PC-3 (cell line): ENCODE measurements at regions of chr2 and their contacts with region 1.

Region 1: GRCh38 chr2:170369894-170370293 is 191.9 kb downstream of the MYO3B start:
- DNase-seq: peak; percentile 79
- ATAC-seq: 0 out of 2 replicates have a peak, but pooled peaks have one; percentile 32
- H3K4me3 ChIP-seq: no peak overlapping the region
- H3K27ac ChIP-seq: no peak overlapping the region
- H3K4me1 ChIP-seq: peaks cover 18% of the 10 kb centered on the region
- H3K27me3 ChIP-seq: no peaks in the 10 kb centered on the region
- CTCF ChIP-seq: peak; percentile 62

Region 2: DNA sequence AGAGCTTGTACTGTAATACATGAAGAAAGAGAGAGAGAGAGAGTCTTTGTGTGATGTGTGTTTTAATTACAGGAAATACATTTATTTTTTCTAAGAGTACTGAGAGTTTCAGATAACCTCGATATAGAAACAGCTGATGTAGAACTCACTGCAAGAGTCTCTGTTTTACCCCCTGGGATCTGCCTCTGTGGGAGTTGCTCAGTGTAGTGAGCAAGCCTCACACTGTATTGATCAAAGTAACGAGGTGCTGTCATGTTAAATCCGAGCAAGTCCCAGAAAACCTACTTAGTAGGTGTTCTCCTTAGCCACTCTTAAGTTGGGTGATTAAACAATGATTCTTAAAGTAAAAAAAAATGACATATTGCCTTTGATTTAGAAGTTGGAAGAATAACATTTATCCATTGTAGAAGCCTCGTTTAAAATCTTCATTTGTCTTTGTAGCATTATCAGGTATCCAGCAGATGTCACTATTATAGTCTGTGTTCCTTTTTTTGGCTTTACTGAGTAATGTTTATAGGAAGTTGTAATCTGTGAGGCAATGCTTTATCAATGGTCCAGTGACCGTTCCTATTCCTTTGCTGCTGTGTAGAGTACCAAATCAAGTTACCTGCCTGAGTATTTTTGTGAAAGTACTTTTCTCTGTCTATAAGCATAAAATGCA is 27.0 kb after region 1 on chr2:
- CTCF ChIA-PET with region 1: no interaction called
- POLR2A ChIA-PET with region 1: no interaction called
- intact Hi-C with region 1: loop called (anchors 1 kb)
- DNase-seq: peak; percentile 63
- ATAC-seq: peak; percentile 68
- H3K4me3 ChIP-seq: no peak overlapping the region
- H3K27ac ChIP-seq: no peak overlapping the region
- H3K4me1 ChIP-seq: peaks cover 11% of the 10 kb centered on the region
- H3K27me3 ChIP-seq: no peaks in the 10 kb centered on the region
- CTCF ChIP-seq: peak; percentile 80

Region 3: DNA sequence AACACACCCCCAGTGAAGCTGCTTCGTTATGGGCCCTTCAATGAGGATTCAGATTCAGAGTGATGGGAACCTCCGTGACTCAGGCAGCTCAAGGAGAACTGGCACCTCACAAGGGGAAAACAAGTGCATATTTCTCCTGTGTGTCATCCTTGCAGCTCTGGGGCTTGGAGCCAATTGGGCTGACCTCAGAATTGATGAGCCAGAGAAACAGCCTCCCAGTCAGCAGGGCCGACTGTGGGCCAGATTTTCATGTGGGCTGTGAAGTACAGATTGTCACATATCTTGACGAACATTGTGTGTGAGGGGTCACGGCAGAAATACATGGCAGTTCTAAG is 155.6 kb after region 1 on chr2:
- CTCF ChIA-PET with region 1: no interaction called
- POLR2A ChIA-PET with region 1: no interaction called
- intact Hi-C with region 1: no loop called
- DNase-seq: peak; percentile 97
- ATAC-seq: peak; percentile 84
- H3K4me3 ChIP-seq: no peak overlapping the region
- H3K27ac ChIP-seq: peak overlapping the region; percentile 39
- H3K4me1 ChIP-seq: peaks cover 25% of the 10 kb centered on the region
- H3K27me3 ChIP-seq: no peaks in the 10 kb centered on the region
- CTCF ChIP-seq: no peak

Region 4: GRCh38 chr2:170739048-170739447 is 369.2 kb after region 1 on chr2:
- CTCF ChIA-PET with region 1: no interaction called
- POLR2A ChIA-PET with region 1: no interaction called
- intact Hi-C with region 1: loop called (anchors 10 kb)
- DNase-seq: peak; percentile 98
- ATAC-seq: peak; percentile 94
- H3K4me3 ChIP-seq: peak overlapping the region; percentile 50
- H3K27ac ChIP-seq: peak overlapping the region; percentile 87
- H3K4me1 ChIP-seq: peaks cover 28% of the 10 kb centered on the region
- H3K27me3 ChIP-seq: no peaks in the 10 kb centered on the region
- CTCF ChIP-seq: no peak

Region 5: DNA sequence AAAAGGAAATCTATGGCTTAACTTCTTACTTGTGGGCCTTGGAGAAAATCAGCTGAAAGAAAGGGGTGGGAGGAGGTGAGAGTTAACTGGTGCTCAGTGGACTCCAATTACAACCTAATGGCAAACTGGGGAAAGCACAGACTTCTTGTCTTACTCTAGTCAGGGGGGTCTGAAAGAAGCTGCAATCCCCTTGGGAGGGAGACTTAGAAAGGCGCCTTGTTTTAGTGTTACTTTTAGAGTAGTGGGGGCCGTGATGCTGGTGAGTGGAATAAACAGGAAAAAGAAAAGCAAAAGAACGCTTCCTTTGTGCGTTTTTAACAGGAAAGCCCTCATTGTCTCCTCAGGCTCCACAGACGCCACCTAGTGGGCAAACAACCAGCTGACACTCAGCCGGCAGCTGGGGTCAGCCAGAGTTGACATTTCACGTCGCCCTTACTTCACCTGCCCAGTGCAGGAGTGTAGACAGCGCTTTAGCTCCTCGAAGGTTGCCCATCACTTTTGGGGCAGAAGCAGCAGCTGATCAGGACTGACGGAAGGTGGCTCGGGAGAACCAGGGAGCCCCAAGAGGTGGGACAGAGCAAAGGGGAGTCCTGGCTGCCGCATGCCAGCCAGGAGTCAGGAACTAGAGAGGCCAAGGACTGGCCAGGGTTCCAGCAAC is 503.3 kb after region 1 on chr2:
- CTCF ChIA-PET with region 1: no interaction called
- POLR2A ChIA-PET with region 1: no interaction called
- intact Hi-C with region 1: loop called (anchors 10 kb)
- DNase-seq: peak; percentile 84
- ATAC-seq: peak; percentile 86
- H3K4me3 ChIP-seq: peak overlapping the region; percentile 49; the same call in 1 of the 2 replicates
- H3K27ac ChIP-seq: no peak overlapping the region
- H3K4me1 ChIP-seq: peaks cover 11% of the 10 kb centered on the region
- H3K27me3 ChIP-seq: no peaks in the 10 kb centered on the region
- CTCF ChIP-seq: peak; percentile 94